Ovary (tissue), 10 donors: ENCODE measurements at regions of chr1 and their contacts with region 1.

Region 1: DNA sequence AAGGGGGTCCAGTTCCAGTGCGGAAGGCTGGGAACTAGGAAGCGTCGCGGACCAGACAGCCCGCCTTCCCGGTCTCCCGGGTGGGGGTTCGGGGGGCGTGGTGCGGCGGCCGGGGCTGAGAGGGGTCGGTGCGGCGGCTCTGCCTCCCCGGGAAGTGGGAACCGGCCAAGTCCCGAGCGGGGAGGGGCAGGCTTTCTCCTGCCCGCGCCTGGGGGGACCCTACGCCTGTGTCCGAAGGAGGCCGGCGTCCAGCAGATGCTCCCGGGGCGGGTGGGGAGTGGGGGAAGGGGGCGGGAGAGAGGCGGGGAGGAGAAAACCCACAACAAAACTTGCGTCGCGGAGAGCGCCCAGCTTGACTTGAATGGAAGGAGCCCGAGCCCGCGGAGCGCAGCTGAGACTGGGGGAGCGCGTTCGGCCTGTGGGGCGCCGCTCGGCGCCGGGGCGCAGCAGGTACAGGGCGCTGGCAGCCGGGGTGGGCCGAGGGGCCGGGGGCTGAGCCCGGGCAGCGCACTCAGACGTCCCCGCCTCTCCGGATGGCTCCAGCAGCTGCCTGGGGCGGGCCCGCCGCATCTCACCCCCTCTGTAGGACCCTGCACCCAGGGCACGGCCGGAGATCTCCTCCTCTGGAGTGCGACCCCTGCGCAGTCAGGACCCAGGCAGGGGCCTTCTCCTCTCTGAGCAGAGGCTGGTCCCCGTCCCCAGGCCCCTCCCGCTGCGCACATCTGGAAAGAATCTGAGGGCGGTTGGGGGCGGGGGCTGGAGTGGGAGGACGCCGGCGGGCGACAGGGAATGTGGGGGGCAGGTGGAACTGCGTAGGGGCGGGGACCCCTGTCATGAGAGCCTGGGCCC is at the start of gene PODN:
- DNase-seq: peak; percentile 79 to 88 (median 86)
- H3K4me3 ChIP-seq: peak within 1 kb of the TSS; percentile 78
- H3K27ac ChIP-seq: peak within 1 kb of the TSS; percentile 88 to 94
- H3K4me1 ChIP-seq: peaks cover 21% of the 10 kb centered on the region
- H3K27me3 ChIP-seq: no peaks in the 10 kb centered on the region
- CTCF ChIP-seq: no peak
- EP300 ChIP-seq: no peak
- POLR2A ChIP-seq: no peak
- total RNA-seq, gene PODN: 106 to 254 (median 154) TPM

Region 2: DNA sequence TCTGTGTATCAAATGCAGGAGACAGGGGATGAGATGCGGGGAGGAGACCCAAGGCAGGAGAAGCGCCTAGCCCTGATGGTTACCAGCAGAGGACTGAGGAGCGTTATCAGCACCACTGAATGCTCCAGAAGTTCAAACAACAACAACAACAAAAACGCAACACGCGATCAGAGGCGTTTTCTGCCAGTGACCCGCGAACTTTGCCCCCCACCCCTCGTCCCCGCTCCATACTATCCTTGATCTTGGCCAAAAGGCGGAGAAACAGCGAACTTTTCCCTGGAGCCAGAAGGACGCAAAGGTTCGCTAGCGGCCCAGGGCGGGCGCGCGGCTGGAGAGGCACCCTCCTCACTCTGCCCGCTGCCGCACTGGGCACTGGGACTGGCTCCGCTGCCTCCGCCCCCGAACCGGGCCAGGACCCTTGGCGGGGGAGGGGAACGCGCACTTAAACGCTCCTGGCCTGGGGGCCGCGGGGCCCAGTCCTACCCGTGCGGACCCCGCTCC is 141.2 kb before region 1 on chr1:
- intact Hi-C with region 1: loop called in 2 of 4 experiments (anchors 5 kb)
- DNase-seq: peak in 3 of 5 donors; percentile 58 to 72 (median 65)
- H3K4me3 ChIP-seq: peak overlapping the region; percentile 60
- H3K27ac ChIP-seq: peak overlapping the region; percentile 93
- H3K4me1 ChIP-seq: peaks cover 26% of the 10 kb centered on the region
- H3K27me3 ChIP-seq: no peaks in the 10 kb centered on the region
- CTCF ChIP-seq: no peak
- EP300 ChIP-seq: no peak
- POLR2A ChIP-seq: no peak

Region 3: DNA sequence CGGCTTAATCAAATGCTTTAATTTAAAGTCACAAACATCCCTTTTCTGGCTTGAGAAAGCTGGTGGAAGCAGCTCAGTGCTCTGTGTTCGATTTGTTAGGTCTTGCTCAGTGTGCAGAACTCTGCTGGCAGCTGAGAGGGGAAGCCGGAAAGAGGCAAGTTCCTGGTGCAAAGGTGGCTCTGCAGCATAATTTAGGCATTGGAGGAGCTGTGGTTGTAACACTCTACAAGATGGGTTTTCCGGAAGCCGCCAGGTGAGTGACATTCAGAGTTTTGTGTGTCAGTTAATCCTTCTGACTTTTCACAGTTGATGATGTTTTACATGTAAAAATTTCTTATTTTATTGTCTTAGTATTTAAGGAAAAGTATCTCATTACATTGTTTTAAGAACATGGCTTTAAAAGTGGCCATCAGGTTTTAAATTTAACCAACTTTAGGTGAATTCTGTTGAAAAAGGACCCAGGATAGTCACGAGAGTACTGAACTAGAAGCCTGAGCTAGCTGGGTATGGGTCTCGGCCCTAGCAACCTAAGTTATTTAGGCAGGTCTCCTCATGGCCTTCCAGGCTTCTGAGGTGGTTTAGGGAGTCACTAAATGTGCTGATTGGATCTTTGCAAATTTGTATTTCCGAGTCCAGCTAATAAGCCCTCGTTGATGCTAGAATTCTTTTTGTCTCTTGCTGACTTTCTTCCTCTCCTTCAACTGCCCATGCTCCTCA is 47.1 kb before region 1 on chr1:
- intact Hi-C with region 1: loop called in 1 of 4 experiments (anchors 10 kb)
- DNase-seq: peak; percentile 62 to 64 (median 63)
- H3K4me3 ChIP-seq: peak overlapping the region; percentile 47
- H3K27ac ChIP-seq: no peak overlapping the region
- H3K4me1 ChIP-seq: peaks cover 5% of the 10 kb centered on the region
- H3K27me3 ChIP-seq: no peaks in the 10 kb centered on the region
- CTCF ChIP-seq: no peak
- EP300 ChIP-seq: no peak
- POLR2A ChIP-seq: no peak

Region 4: DNA sequence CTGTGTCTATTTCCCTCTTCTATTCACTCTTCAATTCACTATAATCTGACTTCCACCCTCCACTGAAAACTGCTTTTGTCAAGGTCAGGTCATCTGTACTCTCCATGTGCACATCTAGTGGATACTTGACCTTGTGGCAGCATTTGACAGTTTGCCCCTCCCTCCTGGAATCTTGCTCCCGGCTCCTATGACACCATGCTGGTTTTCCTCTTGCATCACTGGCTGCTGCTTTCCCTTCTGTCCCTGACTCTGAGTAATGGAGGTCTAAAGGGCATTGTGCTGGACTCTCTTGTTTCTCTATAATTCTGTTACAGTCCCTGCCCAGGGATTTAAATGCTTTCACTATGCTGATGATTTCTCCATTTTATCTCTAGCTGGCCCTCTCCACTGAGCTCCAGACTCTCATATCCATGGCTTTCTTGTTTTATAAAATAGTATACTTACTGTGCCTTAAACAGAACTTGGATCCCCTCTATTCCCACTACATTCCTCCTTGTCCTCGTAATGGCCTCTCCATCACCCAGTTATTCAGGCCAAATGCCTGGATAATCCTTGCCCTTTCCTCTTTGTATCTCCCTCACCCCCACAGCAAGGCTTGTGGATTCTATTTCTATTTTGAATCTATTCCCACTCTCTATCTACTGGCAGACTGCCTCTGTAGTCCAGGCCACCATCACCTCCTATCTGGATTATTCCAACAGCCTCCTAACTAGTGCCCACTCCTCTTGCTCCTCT is 36.9 kb before region 1 on chr1:
- intact Hi-C with region 1: loop called in 1 of 4 experiments (anchors 5 kb)
- DNase-seq: peak; percentile 70 to 80 (median 78)
- H3K4me3 ChIP-seq: no peak overlapping the region
- H3K27ac ChIP-seq: peak overlapping the region in 1 of 2 donors; percentile 71
- H3K4me1 ChIP-seq: peaks cover 8% of the 10 kb centered on the region
- H3K27me3 ChIP-seq: no peaks in the 10 kb centered on the region
- CTCF ChIP-seq: no peak
- EP300 ChIP-seq: no peak
- POLR2A ChIP-seq: no peak